ENCODE measurements at regions of chr2 and their contacts with region 1.

Region 1: DNA sequence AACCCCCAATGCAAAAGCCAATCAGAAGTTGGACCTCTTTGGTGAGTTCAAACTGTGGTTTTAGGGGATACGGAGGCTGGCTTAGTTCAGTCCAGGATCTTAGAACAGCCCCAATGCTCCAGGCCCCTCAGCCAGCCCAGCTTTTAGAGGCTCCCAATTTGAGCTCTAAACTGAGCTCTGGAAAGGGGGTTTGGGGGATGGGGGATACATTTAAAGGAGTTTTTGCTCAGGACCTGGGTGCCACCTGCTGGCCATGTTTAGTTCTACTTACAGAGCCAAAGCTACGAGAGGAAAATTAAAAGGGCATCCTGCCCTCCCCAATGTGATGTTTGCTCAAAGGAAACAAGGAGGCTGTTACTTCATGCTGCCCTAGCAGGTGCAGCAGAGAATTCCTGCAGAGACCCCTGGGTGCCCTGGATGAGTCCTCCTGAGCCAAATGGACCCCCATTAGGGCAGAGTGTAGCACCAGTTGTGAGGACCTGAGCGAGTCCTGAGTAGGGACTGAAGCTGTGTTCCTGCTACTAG is 15.9 kb upstream of the TMEM214 start:
- DNase-seq: peak in 41 of 42 donors; percentile 25 to 86 (median 65)

Region 2: GRCh38 chr2:26959331-26959730 is 57.5 kb before region 1 on chr2:
- intact Hi-C with region 1: loop called (anchors 2 kb)
- DNase-seq: no peak

Region 3: GRCh38 chr2:27105981-27106380 is 89.1 kb after region 1 on chr2:
- intact Hi-C with region 1: no loop called
- DNase-seq: no peak

Region 4: DNA sequence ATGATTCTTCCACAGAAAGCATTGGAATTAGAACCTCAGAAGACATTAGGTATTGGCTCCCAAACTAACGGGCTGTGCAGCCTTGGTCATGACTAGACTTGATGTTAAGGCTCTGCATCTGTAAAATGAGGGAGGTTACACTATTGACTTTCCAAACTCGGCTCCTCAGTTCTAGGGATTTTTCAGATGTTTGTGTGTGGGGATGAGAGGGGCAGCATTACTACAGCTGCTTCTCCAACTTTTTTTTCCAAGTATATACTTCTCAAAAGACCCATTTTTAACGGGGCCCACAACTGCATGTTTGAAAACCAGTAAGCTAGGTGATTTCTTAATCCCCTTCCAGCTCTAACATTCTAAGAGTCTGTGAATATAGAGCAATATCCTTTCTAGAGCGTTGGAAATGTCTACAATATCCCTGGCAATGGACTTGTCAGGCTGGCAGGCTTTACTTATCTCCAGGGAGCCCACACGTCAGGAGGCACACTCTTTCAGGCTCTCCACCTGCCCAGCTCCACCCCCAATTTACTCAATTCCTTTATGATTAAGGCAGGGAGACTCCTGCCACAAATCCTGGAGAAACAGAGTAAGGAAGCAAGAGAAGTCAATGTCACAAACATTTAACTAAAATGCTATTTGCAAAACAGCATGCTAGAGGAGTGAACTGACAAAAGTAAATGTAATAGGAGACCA is 306.9 kb after region 1 on chr2:
- intact Hi-C with region 1: no loop called
- DNase-seq: peak in 1 of 42 donors; percentile 16